ENCODE measurements at regions of chr5 and their contacts with region 1.

Region 1: GRCh38 chr5:154179846-154180710 is 10.5 kb upstream of the GALNT10 start:
- DNase-seq: peak in 6 of 9 experiments; percentile 29 to 71 (median 52)
- ATAC-seq: peak; percentile 95
- H3K4me3 ChIP-seq: no peak overlapping the region
- H3K4me3 Mint-ChIP-seq: no peak overlapping the region
- H3K27ac ChIP-seq: no peak overlapping the region
- H3K27ac Mint-ChIP-seq: no peak overlapping the region
- H3K4me1 ChIP-seq: no peaks in the 10 kb centered on the region
- H3K4me1 Mint-ChIP-seq: peaks cover 1% of the 10 kb centered on the region
- H3K27me3 ChIP-seq: peaks cover 0 to 3% of the 10 kb centered on the region in 2 experiments
- H3K27me3 Mint-ChIP-seq: peaks cover 15% of the 10 kb centered on the region
- CTCF ChIP-seq: peak; percentile 70

Region 2: GRCh38 chr5:153831969-153832368 is 348.1 kb before region 1 on chr5:
- CTCF ChIA-PET with region 1: no interaction called
- POLR2A ChIA-PET with region 1: no interaction called
- intact Hi-C with region 1: no loop called
- DNase-seq: peak in 1 of 9 experiments; percentile 20
- ATAC-seq: no peak
- H3K4me3 ChIP-seq: no peak overlapping the region
- H3K4me3 Mint-ChIP-seq: no peak overlapping the region
- H3K27ac ChIP-seq: no peak overlapping the region
- H3K27ac Mint-ChIP-seq: no peak overlapping the region
- H3K4me1 ChIP-seq: no peaks in the 10 kb centered on the region
- H3K4me1 Mint-ChIP-seq: no peaks in the 10 kb centered on the region
- H3K27me3 ChIP-seq: no peaks in the 10 kb centered on the region
- H3K27me3 Mint-ChIP-seq: peaks cover 5% of the 10 kb centered on the region
- CTCF ChIP-seq: no peak

Region 3: GRCh38 chr5:153974131-153974812 is 205.8 kb before region 1 on chr5:
- CTCF ChIA-PET with region 1: interaction called, 24 read pairs
- POLR2A ChIA-PET with region 1: no interaction called
- intact Hi-C with region 1: loop called in 1 of 2 experiments (anchors 2 kb)
- DNase-seq: peak in 5 of 9 experiments; percentile 17 to 60 (median 19)
- ATAC-seq: peak; percentile 38
- H3K4me3 ChIP-seq: no peak overlapping the region
- H3K4me3 Mint-ChIP-seq: no peak overlapping the region
- H3K27ac ChIP-seq: no peak overlapping the region
- H3K27ac Mint-ChIP-seq: no peak overlapping the region
- H3K4me1 ChIP-seq: no peaks in the 10 kb centered on the region
- H3K4me1 Mint-ChIP-seq: no peaks in the 10 kb centered on the region
- H3K27me3 ChIP-seq: no peaks in the 10 kb centered on the region
- H3K27me3 Mint-ChIP-seq: peaks cover 13% of the 10 kb centered on the region
- CTCF ChIP-seq: peak; percentile 63

Region 4: GRCh38 chr5:154092356-154093141 is 87.5 kb before region 1 on chr5:
- CTCF ChIA-PET with region 1: no interaction called
- POLR2A ChIA-PET with region 1: no interaction called
- intact Hi-C with region 1: no loop called
- DNase-seq: no peak
- ATAC-seq: no peak
- H3K4me3 ChIP-seq: no peak overlapping the region
- H3K4me3 Mint-ChIP-seq: no peak overlapping the region
- H3K27ac ChIP-seq: no peak overlapping the region
- H3K27ac Mint-ChIP-seq: no peak overlapping the region
- H3K4me1 ChIP-seq: no peaks in the 10 kb centered on the region
- H3K4me1 Mint-ChIP-seq: no peaks in the 10 kb centered on the region
- H3K27me3 ChIP-seq: no peaks in the 10 kb centered on the region
- H3K27me3 Mint-ChIP-seq: peaks cover 38% of the 10 kb centered on the region
- CTCF ChIP-seq: no peak

Region 5: GRCh38 chr5:154138701-154139100 is 41.4 kb before region 1 on chr5:
- CTCF ChIA-PET with region 1: no interaction called
- POLR2A ChIA-PET with region 1: no interaction called
- intact Hi-C with region 1: no loop called
- DNase-seq: no peak
- ATAC-seq: no peak
- H3K4me3 ChIP-seq: no peak overlapping the region
- H3K4me3 Mint-ChIP-seq: no peak overlapping the region
- H3K27ac ChIP-seq: no peak overlapping the region
- H3K27ac Mint-ChIP-seq: no peak overlapping the region
- H3K4me1 ChIP-seq: no peaks in the 10 kb centered on the region
- H3K4me1 Mint-ChIP-seq: no peaks in the 10 kb centered on the region
- H3K27me3 ChIP-seq: no peaks in the 10 kb centered on the region
- H3K27me3 Mint-ChIP-seq: peaks cover 3% of the 10 kb centered on the region
- CTCF ChIP-seq: no peak

Region 6: GRCh38 chr5:154196955-154197652 is 17.0 kb after region 1 on chr5:
- CTCF ChIA-PET with region 1: interaction called, 28 read pairs
- POLR2A ChIA-PET with region 1: no interaction called
- intact Hi-C with region 1: no loop called
- DNase-seq: peak in 2 of 9 experiments; percentile 30 to 57
- ATAC-seq: peak; percentile 10
- H3K4me3 ChIP-seq: no peak overlapping the region
- H3K4me3 Mint-ChIP-seq: peak overlapping the region; percentile 35
- H3K27ac ChIP-seq: peak overlapping the region in 1 of 2 experiments; percentile 72
- H3K27ac Mint-ChIP-seq: peak overlapping the region; percentile 94
- H3K4me1 ChIP-seq: peaks cover 57% of the 10 kb centered on the region
- H3K4me1 Mint-ChIP-seq: peaks cover 68% of the 10 kb centered on the region
- H3K27me3 ChIP-seq: no peaks in the 10 kb centered on the region
- H3K27me3 Mint-ChIP-seq: no peaks in the 10 kb centered on the region
- CTCF ChIP-seq: no peak